ENCODE measurements at regions of chr6 and their contacts with region 1.

Region 1: DNA sequence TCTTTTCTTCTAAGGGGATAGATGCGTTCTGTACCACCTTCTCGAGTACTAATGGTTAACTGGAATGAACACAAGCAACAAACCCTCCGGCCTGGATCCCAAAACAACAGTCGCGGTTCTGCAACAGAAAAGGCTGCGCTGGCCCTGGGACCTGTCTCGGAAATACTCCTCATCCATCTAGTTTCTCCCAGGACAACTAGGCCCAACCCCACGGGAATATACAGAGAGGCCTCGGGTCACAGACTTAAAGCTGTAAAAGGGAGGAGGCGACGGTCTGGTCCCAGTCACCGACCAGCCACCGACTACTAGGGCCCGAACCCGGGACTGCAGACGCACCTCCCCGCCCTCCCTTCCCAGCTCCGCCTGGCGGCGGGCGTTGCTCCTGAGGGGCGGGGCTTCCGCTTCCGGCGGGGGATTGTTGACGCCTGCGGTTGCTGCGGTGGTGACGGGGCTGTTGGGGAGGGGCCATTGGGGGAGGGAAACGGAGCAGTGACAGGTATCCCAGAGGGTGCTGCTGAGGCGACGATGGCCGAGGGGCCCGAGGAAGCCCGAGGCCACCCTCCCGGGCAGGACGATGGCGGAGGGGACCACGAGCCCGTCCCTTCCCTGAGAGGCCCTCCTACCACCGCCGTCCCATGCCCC is at the start of gene FAM8A1:
- DNase-seq: peak; percentile 92 to 99 (median 98)

Region 2: GRCh38 chr6:17706580-17707370 is 106.8 kb after region 1 on chr6 and contains the start of gene NUP153:
- intact Hi-C with region 1: loop called (anchors 5 kb)
- DNase-seq: peak; percentile 97 to 100 (median 99)